Activated naive CD4-positive, alpha-beta T cell treated with anti-CD3 and anti-CD28 coated beads, Interleukin-2, amount 10 ng/mL, durations not matched to agents 7 days and 5 days (primary cell): ENCODE measurements at regions of chr4 and their contacts with region 1.

Region 1: DNA sequence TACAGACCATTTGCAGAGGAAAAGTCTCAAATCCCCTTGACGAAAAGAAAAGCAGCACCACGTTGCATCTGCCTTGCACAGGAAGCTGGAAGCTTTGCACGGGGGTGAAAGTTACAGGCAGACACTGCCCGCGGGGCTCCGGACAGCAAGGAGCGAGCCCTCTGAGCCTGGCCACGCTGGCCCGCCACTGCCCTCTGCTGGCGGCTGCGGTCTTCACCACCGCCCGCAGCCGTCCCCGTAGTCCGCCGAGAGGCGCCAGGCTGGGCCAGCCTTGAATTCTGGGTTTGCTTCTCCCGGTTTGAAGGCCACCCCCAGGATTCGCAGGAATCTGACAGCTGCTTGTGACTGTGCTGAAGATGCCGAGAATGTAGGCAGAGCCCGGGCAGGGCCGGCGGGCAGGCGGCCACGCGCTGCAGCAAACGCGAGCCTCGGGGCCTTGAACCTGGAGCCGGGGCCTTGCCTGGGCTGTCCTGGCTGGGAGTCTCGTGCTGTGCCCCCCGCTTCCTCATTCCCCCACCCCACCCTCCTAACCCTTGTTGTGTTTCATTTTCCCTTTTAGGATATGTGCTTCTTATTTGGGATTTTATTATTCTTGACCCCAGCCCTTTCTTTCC is 49.2 kb downstream of the ENPP6 start:
- DNase-seq: peak; percentile 66
- H3K4me3 Mint-ChIP-seq: no peak overlapping the region
- H3K27ac Mint-ChIP-seq: no peak overlapping the region
- H3K4me1 Mint-ChIP-seq: peaks cover 4% of the 10 kb centered on the region
- H3K27me3 Mint-ChIP-seq: peaks cover 61% of the 10 kb centered on the region

Region 2: GRCh38 chr4:183936574-183937345 is 231.8 kb before region 1 on chr4:
- CTCF ChIA-PET with region 1: no interaction called
- DNase-seq: no peak
- H3K4me3 Mint-ChIP-seq: no peak overlapping the region
- H3K27ac Mint-ChIP-seq: no peak overlapping the region
- H3K4me1 Mint-ChIP-seq: no peaks in the 10 kb centered on the region
- H3K27me3 Mint-ChIP-seq: no peaks in the 10 kb centered on the region

Region 3: GRCh38 chr4:184250795-184251669 is 82.5 kb after region 1 on chr4:
- CTCF ChIA-PET with region 1: interaction called, 12 read pairs
- DNase-seq: peak; percentile 34
- H3K4me3 Mint-ChIP-seq: no peak overlapping the region
- H3K27ac Mint-ChIP-seq: no peak overlapping the region
- H3K4me1 Mint-ChIP-seq: peaks cover 8% of the 10 kb centered on the region
- H3K27me3 Mint-ChIP-seq: no peaks in the 10 kb centered on the region